ENCODE measurements at regions of chr20 and their contacts with region 1.

Region 1: DNA sequence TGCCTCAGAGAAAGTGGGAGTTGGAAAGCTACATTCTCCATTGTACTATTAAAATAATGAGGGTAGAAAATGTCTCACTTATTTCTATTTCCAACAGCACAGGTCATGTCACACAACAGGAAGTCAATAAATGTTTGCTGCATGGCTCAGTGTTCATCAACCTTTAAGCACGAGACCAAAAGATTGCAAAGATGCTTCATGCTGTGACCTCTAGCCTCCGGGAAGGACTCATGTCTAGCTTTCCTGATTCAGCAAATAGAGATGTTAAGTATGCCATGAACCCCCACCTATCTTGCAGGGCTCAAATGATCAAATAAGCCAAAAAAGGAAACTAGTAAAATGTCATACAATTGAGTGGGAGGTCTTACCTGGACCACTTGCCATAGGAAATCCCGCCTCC is 57.4 kb downstream of the NCOA6 start:
- DNase-seq: no peak
- ATAC-seq: no peak
- H3K4me3 ChIP-seq: no peak overlapping the region
- H3K27ac ChIP-seq: no peak overlapping the region
- H3K4me1 ChIP-seq: no peaks in the 10 kb centered on the region
- CTCF ChIP-seq: no peak
- EP300 ChIP-seq: no peak
- POLR2A ChIP-seq: no peak
- RAD21 ChIP-seq: no peak

Region 2: DNA sequence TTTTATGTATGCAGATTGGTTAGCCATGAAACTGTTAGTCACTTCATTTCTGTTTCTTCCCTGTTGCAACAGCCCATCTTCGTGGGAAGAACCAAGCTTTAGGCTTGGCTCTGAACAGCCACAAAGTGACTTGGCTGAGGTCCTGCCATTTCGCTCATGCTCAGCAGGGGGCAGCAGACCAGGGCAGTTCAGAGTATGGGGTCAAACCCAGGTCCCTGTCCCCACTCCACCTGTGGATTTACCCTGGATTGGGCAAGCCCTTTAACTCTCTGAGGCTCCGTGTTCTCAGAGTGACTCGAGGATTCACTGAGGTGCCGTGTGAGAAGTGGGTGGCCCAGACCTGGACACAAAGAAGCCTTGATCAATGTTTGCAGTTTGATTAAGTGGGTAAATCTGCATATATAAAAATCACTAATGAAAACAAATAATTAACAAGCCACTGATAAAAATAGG is 229.4 kb before region 1 on chr20:
- CTCF ChIA-PET with region 1: interaction called, 11 read pairs
- POLR2A ChIA-PET with region 1: no interaction called
- DNase-seq: peak in 1 of 2 experiments; percentile 64
- ATAC-seq: peak; percentile 52 to 69; a peak in 3 of 6 replicates
- H3K4me3 ChIP-seq: no peak overlapping the region
- H3K27ac ChIP-seq: no peak overlapping the region
- H3K4me1 ChIP-seq: no peaks in the 10 kb centered on the region
- CTCF ChIP-seq: peak; percentile 72
- EP300 ChIP-seq: no peak
- POLR2A ChIP-seq: no peak
- RAD21 ChIP-seq: peak; percentile 49 to 59

Region 3: GRCh38 chr20:34704177-34705007 is 63.7 kb before region 1 on chr20 and contains the start of gene TP53INP2:
- CTCF ChIA-PET with region 1: interaction called, 16 read pairs
- POLR2A ChIA-PET with region 1: no interaction called
- DNase-seq: peak; percentile 82 to 89
- ATAC-seq: peak; percentile 50 to 66
- H3K4me3 ChIP-seq: peak within 1 kb of the TSS; percentile 94
- H3K27ac ChIP-seq: peak within 1 kb of the TSS; percentile 80 to 93
- H3K4me1 ChIP-seq: peaks cover 26% of the 10 kb centered on the region
- CTCF ChIP-seq: no peak
- EP300 ChIP-seq: no peak
- POLR2A ChIP-seq: no peak
- RAD21 ChIP-seq: no peak
- polyA plus RNA-seq, gene TP53INP2: 2.2 and 3.6 TPM in 2 replicates

Region 4: GRCh38 chr20:34744847-34745246 is 23.2 kb before region 1 on chr20:
- CTCF ChIA-PET with region 1: interaction called, 39 read pairs
- POLR2A ChIA-PET with region 1: no interaction called
- DNase-seq: no peak
- ATAC-seq: no peak
- H3K4me3 ChIP-seq: no peak overlapping the region
- H3K27ac ChIP-seq: no peak overlapping the region
- H3K4me1 ChIP-seq: no peaks in the 10 kb centered on the region
- CTCF ChIP-seq: no peak
- EP300 ChIP-seq: no peak
- POLR2A ChIP-seq: no peak
- RAD21 ChIP-seq: no peak

Region 5: GRCh38 chr20:34797012-34797995 is 29.2 kb after region 1 on chr20:
- CTCF ChIA-PET with region 1: interaction called, 10 read pairs
- POLR2A ChIA-PET with region 1: no interaction called
- DNase-seq: no peak
- ATAC-seq: no peak
- H3K4me3 ChIP-seq: no peak overlapping the region
- H3K27ac ChIP-seq: 0 out of 6 replicates have a peak overlapping the region, but pooled peaks of 1 of the 2 experiments have one; percentile 16
- H3K4me1 ChIP-seq: peaks cover 2% of the 10 kb centered on the region; the same call in 2 of the 3 replicates
- CTCF ChIP-seq: no peak
- EP300 ChIP-seq: no peak
- POLR2A ChIP-seq: no peak
- RAD21 ChIP-seq: no peak

Region 6: DNA sequence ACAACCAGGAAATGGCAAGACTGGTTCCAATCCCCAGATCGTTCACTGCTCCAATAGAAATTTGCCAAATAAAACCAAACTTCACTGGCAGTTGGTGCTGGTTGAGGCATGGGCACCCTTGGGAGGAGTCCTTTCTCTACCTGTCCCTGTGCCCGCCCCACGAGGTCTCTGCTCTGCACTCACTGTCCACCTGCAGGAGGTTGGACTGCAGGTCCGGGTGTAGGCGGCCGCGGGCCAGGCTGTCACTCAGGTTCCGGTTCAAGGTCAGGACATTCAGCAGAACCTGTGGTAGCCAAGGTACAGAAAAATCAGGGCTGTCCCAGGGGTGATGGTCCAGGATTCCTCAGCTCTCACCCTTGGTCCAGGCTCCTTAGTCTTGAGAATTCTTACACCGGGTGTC is 81.7 kb after region 1 on chr20:
- CTCF ChIA-PET with region 1: no interaction called
- POLR2A ChIA-PET with region 1: no interaction called
- DNase-seq: no peak
- ATAC-seq: no peak
- H3K4me3 ChIP-seq: no peak overlapping the region
- H3K27ac ChIP-seq: no peak overlapping the region
- H3K4me1 ChIP-seq: no peaks in the 10 kb centered on the region
- CTCF ChIP-seq: no peak
- EP300 ChIP-seq: no peak
- POLR2A ChIP-seq: no peak
- RAD21 ChIP-seq: no peak

Region 7: DNA sequence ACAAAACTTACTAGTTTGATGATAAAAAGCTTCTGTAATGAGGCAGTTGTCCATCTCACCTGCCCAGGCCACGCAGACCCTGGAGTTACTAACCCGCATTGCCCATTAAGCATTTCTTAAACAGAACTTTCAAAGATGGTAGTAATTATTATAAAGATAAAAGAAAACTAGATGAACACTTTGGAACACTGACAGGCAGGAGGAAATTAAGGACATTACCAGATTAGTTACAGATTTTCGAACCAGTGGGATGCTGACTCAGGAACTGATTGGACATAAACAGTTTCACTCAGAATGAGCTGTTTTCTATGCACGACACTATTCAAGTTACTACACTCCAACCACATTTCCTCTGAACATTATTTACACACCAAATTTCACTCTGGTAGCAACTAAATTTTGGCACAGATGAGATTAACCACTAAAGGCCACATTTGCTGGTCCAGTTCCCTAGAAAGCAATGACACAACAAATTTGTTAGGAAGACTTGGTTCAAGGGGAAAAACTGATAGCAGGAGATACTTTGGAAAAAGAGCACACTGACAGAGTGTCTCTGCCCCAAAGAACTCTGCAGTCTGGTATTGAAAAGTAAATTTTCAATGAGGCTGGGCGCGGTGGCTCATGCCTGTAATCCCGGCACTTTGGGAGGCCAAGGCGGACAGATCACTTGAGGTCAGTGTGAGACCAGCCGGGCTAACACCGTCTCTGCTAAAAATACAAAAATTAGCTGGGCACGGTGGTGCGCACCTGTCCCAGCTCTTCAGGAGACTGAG is 934.1 kb after region 1 on chr20:
- CTCF ChIA-PET with region 1: no interaction called
- POLR2A ChIA-PET with region 1: no interaction called
- DNase-seq: no peak
- ATAC-seq: no peak
- H3K4me3 ChIP-seq: no peak overlapping the region
- H3K27ac ChIP-seq: no peak overlapping the region
- H3K4me1 ChIP-seq: peaks cover 28% of the 10 kb centered on the region
- CTCF ChIP-seq: no peak
- EP300 ChIP-seq: no peak
- POLR2A ChIP-seq: no peak
- RAD21 ChIP-seq: no peak

Region 8: DNA sequence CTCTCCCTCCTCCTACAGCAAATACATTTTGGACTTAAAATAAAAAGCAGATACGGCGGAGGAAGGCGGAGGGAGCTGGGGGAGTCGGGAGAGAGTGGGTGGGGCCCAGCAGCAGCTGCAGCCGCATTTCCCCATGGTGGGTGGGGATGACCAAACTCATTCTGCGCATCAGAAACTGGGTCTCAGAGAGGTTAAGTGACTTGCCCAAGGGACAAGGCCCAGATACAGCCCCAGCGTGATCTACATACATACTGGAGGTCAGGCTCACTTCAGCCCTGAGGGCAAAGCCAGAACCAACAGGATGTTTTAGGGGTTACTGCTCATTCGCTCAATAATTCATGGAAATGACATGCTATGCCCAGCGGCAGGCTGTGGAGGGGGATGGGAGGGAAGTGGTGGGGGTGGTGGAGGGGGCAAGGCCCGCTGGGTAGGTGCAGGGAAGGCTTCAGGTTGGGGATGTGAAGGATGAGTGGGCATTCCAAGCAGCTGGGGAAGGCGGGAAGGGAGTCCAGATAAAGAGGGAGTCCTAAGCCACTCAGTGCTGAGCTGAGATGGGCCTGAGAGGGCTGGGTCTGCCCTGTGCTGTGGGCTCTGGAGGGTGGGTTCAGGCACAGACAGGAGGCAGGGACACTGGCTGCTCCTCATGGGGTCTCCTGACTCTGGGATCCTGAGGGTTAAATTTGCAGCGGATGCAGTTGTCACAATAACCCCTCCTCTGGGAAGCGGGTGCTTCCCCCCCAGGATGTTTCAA is 1569.0 kb after region 1 on chr20:
- CTCF ChIA-PET with region 1: no interaction called
- POLR2A ChIA-PET with region 1: no interaction called
- DNase-seq: no peak
- ATAC-seq: peak in 1 of 2 experiments; percentile 20; a peak in 1 of 6 replicates
- H3K4me3 ChIP-seq: no peak overlapping the region
- H3K27ac ChIP-seq: no peak overlapping the region
- H3K4me1 ChIP-seq: no peaks in the 10 kb centered on the region
- CTCF ChIP-seq: no peak
- EP300 ChIP-seq: no peak
- POLR2A ChIP-seq: no peak
- RAD21 ChIP-seq: no peak

Measured in A549 (cell line).